ENCODE measurements at regions of chr12 and their contacts with region 1.

Region 1: GRCh38 chr12:53098982-53099651 is 1.6 kb downstream of the IGFBP6 start:
- DNase-seq: peak; percentile 96
- H3K4me3 ChIP-seq: peak overlapping the region in 5 of 8 donors; percentile 48 to 75 (median 56)
- H3K27ac ChIP-seq: peak overlapping the region; percentile 50 to 88 (median 84)
- H3K4me1 ChIP-seq: peaks cover 21 to 91% (median 58%) of the 10 kb centered on the region in 6 donors
- H3K27me3 ChIP-seq: peaks cover 0 to 22% (median 0%) of the 10 kb centered on the region in 7 donors
- CTCF ChIP-seq: peak; percentile 92 to 98 (median 96)
- POLR2A ChIP-seq: no peak

Region 2: GRCh38 chr12:53068811-53069585 is 30.1 kb before region 1 on chr12:
- intact Hi-C with region 1: loop called (anchors 2 kb)
- DNase-seq: no peak
- H3K4me3 ChIP-seq: no peak overlapping the region
- H3K27ac ChIP-seq: peak overlapping the region in 6 of 8 donors; percentile 46 to 94 (median 74)
- H3K4me1 ChIP-seq: peaks cover 25 to 93% (median 69%) of the 10 kb centered on the region in 6 donors
- H3K27me3 ChIP-seq: no peaks in the 10 kb centered on the region
- CTCF ChIP-seq: no peak
- POLR2A ChIP-seq: no peak